PC-9 (cell line): ENCODE measurements at regions of chr17 and their contacts with region 1.

Region 1: GRCh38 chr17:39335704-39336223 is 65.7 kb downstream of the FBXL20 start:
- DNase-seq: no peak
- H3K4me3 ChIP-seq: no peak overlapping the region
- H3K27ac ChIP-seq: no peak overlapping the region
- H3K4me1 ChIP-seq: no peaks in the 10 kb centered on the region
- H3K27me3 ChIP-seq: no peaks in the 10 kb centered on the region
- CTCF ChIP-seq: no peak

Region 2: DNA sequence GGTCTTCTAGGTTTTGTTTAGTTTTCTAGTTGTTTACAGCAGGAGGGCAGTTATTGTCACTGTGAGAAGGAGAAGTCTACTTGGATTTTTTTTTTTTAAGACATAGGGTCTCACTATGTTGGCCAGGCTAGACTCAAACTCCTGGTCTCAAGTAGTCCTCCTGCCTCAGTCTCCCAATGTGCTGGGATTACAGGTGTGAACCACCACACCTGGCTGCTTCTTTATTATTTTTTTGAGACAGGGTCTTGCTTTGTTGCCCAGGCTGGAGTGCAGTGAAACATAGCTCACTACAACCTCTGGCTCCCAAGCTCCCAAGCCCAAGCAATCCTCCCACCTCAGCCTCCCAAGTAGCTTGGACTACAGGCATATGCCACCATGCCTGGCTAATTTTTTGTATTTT is 41.7 kb before region 1 on chr17:
- CTCF ChIA-PET with region 1: no interaction called
- POLR2A ChIA-PET with region 1: no interaction called
- intact Hi-C with region 1: no loop called
- DNase-seq: no peak
- H3K4me3 ChIP-seq: no peak overlapping the region
- H3K27ac ChIP-seq: no peak overlapping the region
- H3K4me1 ChIP-seq: no peaks in the 10 kb centered on the region
- H3K27me3 ChIP-seq: no peaks in the 10 kb centered on the region
- CTCF ChIP-seq: no peak

Region 3: DNA sequence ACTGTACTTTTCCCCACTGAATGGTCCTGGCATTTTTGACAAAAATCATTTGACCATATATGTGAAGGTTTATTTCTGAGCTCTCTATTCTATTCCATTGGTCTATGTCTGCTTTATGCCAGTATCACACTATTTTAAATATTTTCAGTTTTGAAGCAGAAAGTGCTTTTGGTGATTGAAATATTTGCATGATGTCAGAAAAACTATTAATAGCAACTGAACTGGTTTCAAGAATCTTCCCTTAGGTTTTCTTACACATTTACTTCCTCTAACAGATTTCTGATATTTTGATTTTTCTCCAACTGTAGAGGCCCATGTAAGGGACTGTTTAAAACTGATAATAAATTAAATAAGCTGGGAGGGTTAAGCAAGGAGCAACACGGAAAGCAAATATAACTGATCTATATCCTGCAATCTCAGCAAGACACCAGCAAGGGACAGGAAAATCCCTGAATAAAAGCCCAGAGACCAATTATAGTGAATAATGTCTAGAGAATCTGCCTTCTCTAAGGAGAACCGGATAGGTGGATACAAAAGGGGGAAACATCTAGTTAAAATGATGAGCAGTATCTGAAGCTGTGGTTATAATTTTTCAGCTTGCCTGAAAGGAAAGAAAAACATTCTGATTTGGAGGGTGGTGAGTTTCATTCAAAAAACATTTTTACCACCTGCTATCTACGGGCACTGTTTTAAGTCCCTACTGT is 29.1 kb before region 1 on chr17:
- CTCF ChIA-PET with region 1: no interaction called
- POLR2A ChIA-PET with region 1: interaction called, 17 read pairs
- intact Hi-C with region 1: no loop called
- DNase-seq: no peak
- H3K4me3 ChIP-seq: no peak overlapping the region
- H3K27ac ChIP-seq: no peak overlapping the region
- H3K4me1 ChIP-seq: no peaks in the 10 kb centered on the region
- H3K27me3 ChIP-seq: no peaks in the 10 kb centered on the region
- CTCF ChIP-seq: no peak